ENCODE measurements at regions of chr1 and their contacts with region 1.

Region 1: DNA sequence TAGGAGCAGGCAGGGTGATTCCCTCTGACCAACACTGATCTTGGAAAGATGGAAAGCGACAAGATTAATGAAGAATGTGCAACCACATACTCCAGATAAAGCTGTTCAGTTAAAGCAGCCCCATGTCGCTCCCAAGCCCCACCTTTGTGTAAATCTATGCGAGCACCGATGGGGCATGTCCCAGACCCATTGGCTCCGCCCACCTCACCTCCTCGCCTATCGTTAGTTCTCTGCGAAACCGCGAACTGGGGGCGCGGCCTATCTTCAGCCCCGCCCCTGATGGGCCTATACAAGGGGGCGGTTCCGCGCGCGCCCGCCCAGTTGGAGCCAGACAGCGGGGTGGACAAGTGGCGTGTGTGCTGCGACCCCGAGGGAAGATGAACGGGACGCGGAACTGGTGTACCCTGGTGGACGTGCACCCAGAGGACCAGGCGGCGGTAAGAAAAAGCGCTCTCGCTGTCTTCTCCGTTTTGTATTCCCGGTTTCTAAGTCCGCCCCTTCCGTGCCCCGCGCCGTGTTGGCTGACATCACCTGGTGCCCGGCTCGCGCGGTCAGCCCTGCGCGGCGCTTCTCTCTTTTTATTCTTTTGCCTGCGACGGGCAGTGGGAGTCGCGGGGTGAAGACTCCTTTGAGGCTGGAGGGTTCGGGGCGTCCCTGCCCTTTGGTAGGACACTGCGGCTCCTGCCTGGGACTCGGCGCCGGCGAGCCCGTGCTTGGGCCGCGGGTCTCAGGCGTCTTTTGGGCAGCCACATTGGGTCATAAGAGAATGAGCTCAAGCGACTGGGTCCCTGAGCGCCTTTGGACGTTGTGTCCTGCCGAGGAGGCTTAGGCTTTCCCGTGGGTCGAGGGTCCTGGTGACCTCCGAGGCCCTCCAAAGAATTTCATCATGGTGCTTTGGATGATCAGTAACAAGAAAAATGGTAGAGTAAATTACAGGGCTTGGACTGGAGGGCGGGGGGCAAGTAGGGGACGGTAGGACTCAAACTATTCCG is at the start of gene TUFT1:
- DNase-seq: peak in 1 of 2 donors; percentile 94
- H3K4me3 ChIP-seq: peak within 1 kb of the TSS; percentile 61 to 68
- H3K27ac ChIP-seq: peak within 1 kb of the TSS; percentile 70
- H3K4me1 ChIP-seq: peaks cover 38% of the 10 kb centered on the region
- H3K27me3 ChIP-seq: no peaks in the 10 kb centered on the region
- CTCF ChIP-seq: no peak
- POLR2A ChIP-seq: peak; percentile 18 to 77
- total RNA-seq, gene TUFT1: 16.0 TPM

Region 2: DNA sequence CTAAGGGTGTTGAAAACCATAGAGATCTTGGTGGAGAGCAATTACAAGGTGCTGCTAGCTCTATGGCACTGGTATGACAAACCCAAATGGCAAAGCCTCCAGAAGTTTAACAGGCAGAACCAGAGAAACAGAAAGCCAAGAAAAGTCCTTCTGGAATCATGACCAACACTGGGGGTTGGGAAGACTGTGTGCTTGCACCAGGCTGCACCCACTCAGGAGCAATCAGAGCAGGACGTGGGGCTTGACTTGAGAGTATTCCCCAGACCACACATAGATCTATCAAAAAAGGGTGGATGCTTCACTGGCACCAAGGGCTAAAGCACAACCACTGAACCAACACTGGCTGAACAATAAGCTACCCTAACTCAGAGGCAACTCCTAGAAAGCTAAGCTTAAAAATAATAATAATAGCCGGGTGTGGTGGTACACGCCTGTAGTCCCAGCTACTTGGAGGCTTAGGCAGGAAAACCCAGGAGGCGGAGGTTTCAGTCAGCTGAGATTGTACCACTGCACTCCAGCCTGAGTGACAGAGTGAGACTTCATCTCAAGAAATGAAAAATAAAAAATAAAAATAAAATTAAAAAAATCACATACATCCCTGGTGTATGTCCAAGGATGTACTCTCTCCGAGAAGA is 890.7 kb before region 1 on chr1:
- intact Hi-C with region 1: loop called (anchors 10 kb)
- DNase-seq: no peak
- H3K4me3 ChIP-seq: no peak overlapping the region
- H3K27ac ChIP-seq: no peak overlapping the region
- H3K4me1 ChIP-seq: no peaks in the 10 kb centered on the region
- H3K27me3 ChIP-seq: no peaks in the 10 kb centered on the region
- CTCF ChIP-seq: no peak
- POLR2A ChIP-seq: no peak

Region 3: DNA sequence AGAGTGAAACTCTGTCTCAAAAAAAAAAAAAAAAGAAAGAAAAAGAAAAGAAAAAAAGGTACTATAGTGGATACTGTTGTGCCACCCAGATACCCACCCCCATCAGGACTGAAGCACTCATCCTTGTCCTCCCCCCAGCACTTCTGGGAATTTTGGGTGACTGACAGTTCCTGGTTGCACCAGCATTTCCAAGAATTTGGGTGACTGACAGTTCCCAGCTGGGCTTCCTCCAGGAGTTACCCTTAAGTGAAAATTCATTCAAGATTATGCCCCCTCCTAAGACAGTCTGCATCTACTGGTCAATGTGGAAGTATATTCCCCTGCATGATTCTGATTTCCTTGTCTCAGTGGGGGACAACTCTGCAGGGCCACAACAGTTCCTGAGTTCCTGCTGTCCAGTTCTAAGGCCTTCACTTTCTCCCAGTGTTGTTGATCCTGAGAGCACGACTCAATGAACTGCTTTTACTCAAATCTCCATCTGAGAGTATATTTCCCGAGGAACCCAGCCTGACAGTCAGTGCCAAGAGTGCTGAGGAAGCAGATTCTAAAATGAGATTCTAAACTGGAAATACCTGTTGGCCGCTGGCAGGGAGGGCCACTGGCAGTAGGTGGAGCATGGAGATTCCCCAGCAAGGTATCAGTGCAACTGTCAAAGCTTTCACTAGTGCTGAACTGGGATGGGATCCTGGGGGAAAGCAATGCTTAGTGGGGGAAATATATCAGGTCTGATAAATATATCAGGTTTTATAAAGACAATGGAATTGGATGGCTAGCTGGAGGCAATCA is 199.5 kb after region 1 on chr1:
- intact Hi-C with region 1: loop called (anchors 10 kb)
- DNase-seq: peak in 1 of 2 donors; percentile 56
- H3K4me3 ChIP-seq: no peak overlapping the region
- H3K27ac ChIP-seq: no peak overlapping the region
- H3K4me1 ChIP-seq: no peaks in the 10 kb centered on the region
- H3K27me3 ChIP-seq: no peaks in the 10 kb centered on the region
- CTCF ChIP-seq: no peak
- POLR2A ChIP-seq: no peak

Region 4: GRCh38 chr1:153058826-153059784 is 1518.8 kb after region 1 on chr1:
- intact Hi-C with region 1: no loop called
- DNase-seq: no peak
- H3K4me3 ChIP-seq: no peak overlapping the region
- H3K27ac ChIP-seq: no peak overlapping the region
- H3K4me1 ChIP-seq: no peaks in the 10 kb centered on the region
- H3K27me3 ChIP-seq: no peaks in the 10 kb centered on the region
- CTCF ChIP-seq: no peak
- POLR2A ChIP-seq: no peak